H1 (cell line): ENCODE measurements at regions of chr9 and their contacts with region 1.

Region 1: GRCh38 chr9:126626127-126626925 is 12.6 kb downstream of the LMX1B start:
- DNase-seq: peak in 1 of 2 experiments; percentile 75
- H3K4me3 ChIP-seq: peak overlapping the region; percentile 2 to 56 (median 36); a peak in 6 of 8 replicates
- H3K27ac ChIP-seq: no peak overlapping the region
- H3K4me1 ChIP-seq: peaks cover 0 to 43% (median 33%) of the 10 kb centered on the region in 4 experiments; a peak in 6 of 7 replicates
- H3K27me3 ChIP-seq: peaks cover 80 to 100% (median 95%) of the 10 kb centered on the region in 4 experiments
- CTCF ChIP-seq: no peak
- EP300 ChIP-seq: no peak
- POLR2A ChIP-seq: no peak
- RAD21 ChIP-seq: no peak

Region 2: DNA sequence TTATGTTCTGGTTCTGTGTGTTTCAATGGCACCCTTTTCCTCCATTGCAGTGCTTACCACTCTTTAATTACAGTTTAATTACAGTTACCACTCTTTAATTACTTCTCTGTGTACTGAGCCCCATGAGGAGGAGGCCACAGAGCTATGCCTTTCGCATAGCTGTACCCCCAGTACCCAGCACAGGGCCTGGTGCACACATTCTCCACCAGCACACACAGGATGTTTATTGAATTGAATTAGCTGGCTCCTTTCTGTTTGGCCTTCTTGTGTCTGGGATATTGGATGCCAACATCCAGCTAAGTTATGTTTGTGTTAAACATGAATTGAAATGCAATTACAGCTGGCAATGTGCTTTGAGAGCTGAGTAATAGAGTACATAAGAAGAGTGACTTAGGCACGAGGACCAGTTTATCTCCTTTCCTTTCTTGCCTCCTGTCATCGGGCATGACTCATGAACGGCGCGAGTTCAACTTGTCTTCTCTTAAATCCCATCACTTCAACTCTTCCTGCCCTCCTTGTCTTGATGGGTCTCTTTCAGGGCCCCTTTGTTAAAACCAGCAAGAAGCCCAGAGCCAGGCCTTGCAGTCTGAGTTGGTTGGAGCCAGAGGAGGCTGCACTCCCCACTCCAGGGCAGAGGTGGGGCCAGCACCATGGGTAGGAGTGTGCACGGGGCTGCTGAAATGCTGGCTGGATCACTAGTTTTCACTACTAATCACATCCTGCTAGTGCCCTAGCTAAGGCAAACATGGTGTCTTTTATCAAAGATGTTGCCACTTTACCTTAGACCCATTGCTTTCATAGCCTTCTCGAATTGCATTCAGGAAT is 262.3 kb before region 1 on chr9:
- CTCF ChIA-PET with region 1: no interaction called
- POLR2A ChIA-PET with region 1: no interaction called
- DNase-seq: no peak
- H3K4me3 ChIP-seq: no peak overlapping the region
- H3K27ac ChIP-seq: no peak overlapping the region
- H3K4me1 ChIP-seq: no peaks in the 10 kb centered on the region
- H3K27me3 ChIP-seq: no peaks in the 10 kb centered on the region
- CTCF ChIP-seq: no peak
- EP300 ChIP-seq: no peak
- POLR2A ChIP-seq: no peak
- RAD21 ChIP-seq: no peak

Region 3: DNA sequence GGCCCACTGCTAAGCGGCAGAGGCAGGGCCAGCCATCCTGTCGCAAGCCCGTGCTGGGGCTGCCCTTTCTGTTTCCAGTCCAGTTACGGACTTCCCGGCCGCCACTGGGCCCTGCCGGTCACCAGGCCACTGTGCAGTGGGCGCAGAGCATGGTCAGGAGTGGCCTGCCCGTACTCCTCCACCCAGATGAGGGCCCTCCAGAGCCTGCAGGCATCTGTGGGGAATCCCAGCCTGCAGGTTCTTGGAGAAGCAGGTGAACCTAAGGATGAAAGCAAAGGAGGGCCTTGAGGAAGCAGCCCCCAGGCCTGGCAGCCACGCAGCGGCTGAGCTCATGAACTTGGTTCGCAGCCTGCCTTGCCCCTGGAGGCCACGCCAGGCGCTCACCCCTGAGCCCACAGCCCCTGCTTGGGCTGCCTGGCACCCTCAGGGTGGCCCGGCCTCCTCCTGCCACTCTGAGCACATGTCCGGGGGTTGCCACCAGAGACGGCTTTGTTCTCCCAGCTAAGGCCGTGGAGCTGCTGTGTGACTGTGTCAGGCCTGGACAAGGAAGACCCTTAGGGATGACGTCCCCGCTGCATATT is 119.9 kb before region 1 on chr9:
- CTCF ChIA-PET with region 1: no interaction called
- POLR2A ChIA-PET with region 1: no interaction called
- DNase-seq: no peak
- H3K4me3 ChIP-seq: no peak overlapping the region
- H3K27ac ChIP-seq: no peak overlapping the region
- H3K4me1 ChIP-seq: peaks cover 0 to 4% (median 1%) of the 10 kb centered on the region in 4 experiments; a peak in 2 of 7 replicates
- H3K27me3 ChIP-seq: no peaks in the 10 kb centered on the region; a peak in 3 of 7 replicates
- CTCF ChIP-seq: no peak
- EP300 ChIP-seq: no peak
- POLR2A ChIP-seq: no peak
- RAD21 ChIP-seq: no peak

Region 4: GRCh38 chr9:126581893-126582292 is 44.4 kb before region 1 on chr9:
- CTCF ChIA-PET with region 1: no interaction called
- POLR2A ChIA-PET with region 1: no interaction called
- DNase-seq: no peak
- H3K4me3 ChIP-seq: no peak overlapping the region
- H3K27ac ChIP-seq: no peak overlapping the region
- H3K4me1 ChIP-seq: peaks cover 0 to 7% (median 3%) of the 10 kb centered on the region in 4 experiments; a peak in 4 of 7 replicates
- H3K27me3 ChIP-seq: 0 out of 7 replicates have a peak, but pooled peaks cover 0 to 2% (median 0%) of the 10 kb centered on the region in 4 experiments
- CTCF ChIP-seq: no peak
- EP300 ChIP-seq: no peak
- POLR2A ChIP-seq: no peak
- RAD21 ChIP-seq: no peak

Region 5: DNA sequence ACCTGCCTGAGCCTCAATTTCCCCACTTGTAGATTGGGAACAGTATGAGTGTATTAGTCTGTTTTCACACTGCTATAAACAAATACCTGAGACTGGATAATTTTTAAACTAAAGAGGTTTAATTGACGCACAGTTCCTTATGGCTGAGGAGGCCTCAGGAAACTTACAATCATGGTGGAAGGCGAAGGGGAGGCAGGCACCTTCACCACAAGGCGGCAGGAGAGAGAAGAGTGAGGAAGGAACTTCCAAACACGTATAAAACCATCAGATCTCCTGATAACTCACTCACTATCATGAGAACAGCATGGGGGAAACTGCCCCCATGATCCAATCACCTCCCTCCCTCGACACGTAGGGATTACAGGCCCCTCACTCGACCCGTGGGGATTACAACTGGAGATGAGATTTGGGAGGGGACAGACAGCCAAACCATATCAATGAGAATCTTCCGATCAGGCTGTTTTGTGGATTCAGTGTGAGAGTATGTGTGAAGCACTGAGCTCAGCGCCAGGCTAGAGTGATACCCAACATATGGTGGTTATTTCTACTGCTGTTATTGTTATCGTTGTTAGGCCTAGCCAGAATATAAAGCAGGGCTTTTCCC is 27.2 kb before region 1 on chr9:
- CTCF ChIA-PET with region 1: no interaction called
- POLR2A ChIA-PET with region 1: no interaction called
- DNase-seq: peak in 1 of 2 experiments; percentile 62
- H3K4me3 ChIP-seq: no peak overlapping the region
- H3K27ac ChIP-seq: no peak overlapping the region
- H3K4me1 ChIP-seq: no peaks in the 10 kb centered on the region
- H3K27me3 ChIP-seq: peaks cover 0 to 3% (median 1%) of the 10 kb centered on the region in 4 experiments; a peak in 3 of 7 replicates
- CTCF ChIP-seq: peak; percentile 50 to 70 (median 63)
- EP300 ChIP-seq: no peak
- POLR2A ChIP-seq: no peak
- RAD21 ChIP-seq: peak; percentile 27 to 46; a peak in 3 of 4 replicates

Region 6: DNA sequence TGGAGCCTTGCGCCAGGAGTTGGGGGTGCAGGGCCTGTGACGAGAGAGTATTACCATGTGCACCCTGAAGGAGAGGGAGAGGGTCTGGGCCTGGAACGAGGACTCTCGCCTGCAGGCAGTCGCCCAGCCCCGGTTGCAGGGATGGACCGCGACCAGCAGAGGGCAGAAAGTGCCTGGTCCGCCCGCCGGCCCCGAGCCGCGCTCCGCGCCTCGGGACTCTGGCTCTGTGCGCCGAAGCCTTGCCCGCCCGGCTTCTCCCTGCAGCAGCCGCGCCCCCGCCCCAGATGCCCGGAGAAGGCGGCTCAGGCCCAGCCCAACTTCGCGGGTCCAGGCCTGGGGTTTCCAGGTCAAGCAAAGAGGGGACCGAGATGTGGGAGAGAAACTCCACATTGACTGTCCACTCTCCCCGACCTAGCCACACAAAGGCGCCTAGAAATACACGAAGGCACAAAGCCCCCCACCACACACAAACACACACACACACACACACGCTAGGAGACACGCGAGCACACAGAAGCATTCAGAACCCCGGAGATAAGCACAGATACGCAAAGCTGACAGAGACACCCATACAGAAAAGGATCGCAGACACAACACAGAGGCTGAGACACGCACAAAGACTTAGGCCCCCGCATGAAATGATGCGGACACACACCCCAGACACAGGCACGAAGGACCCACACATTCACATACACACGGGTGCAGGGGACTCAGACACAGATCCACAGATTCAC is 14.6 kb before region 1 on chr9:
- CTCF ChIA-PET with region 1: interaction called, 17 read pairs
- POLR2A ChIA-PET with region 1: interaction called, 14 read pairs
- DNase-seq: peak; percentile 70 to 95
- H3K4me3 ChIP-seq: peak overlapping the region; percentile 30 to 63 (median 34); a peak in 6 of 8 replicates
- H3K27ac ChIP-seq: no peak overlapping the region
- H3K4me1 ChIP-seq: peaks cover 12 to 54% (median 34%) of the 10 kb centered on the region in 4 experiments
- H3K27me3 ChIP-seq: peaks cover 80 to 92% (median 85%) of the 10 kb centered on the region in 4 experiments; a peak in 6 of 7 replicates
- CTCF ChIP-seq: peak in 2 of 3 experiments; percentile 87; a peak in 3 of 4 replicates
- EP300 ChIP-seq: no peak; a peak in 1 of 3 replicates
- POLR2A ChIP-seq: no peak
- RAD21 ChIP-seq: peak; percentile 72 to 82

Region 7: DNA sequence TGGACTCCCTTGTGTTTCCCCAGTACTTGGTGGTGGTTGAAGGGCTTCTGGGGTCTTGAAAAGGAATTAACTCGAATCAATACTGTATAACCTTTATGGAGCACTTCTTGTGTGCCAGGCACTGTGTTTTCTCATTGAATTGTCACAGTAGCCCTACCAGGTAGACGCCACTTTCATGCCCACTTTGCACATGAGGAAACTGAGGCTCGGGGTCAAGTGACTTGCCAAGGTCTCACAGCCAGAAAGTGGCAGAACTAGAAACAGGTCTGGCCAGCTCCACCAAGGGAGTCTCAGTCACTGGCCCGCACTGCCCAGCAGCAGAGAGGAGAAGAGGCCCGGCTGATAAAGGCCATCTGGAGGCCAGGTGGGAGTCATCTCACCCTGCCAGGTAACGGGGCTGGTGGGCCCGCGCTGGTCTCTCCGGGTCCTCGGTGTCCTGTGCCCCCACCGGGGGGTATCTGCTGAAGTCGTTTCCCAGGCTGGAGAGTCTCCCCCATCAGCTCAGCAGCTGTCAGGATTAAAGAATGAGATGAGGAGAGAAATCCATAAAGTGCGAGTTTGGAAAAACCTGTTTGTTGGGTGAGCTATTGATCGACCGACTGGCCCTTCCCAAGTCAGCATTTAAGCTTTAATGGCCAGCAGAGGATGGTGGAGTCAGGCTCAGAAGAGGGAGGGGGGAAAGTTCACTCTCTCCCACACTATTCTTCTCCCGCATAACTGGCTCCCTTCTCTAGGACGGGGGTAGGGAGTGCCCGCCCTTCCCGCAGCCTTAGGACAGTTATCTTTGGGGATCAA is 17.6 kb after region 1 on chr9:
- CTCF ChIA-PET with region 1: interaction called, 33 read pairs
- POLR2A ChIA-PET with region 1: interaction called, 6 read pairs
- DNase-seq: no peak
- H3K4me3 ChIP-seq: no peak overlapping the region
- H3K27ac ChIP-seq: no peak overlapping the region
- H3K4me1 ChIP-seq: peaks cover 0 to 19% (median 7%) of the 10 kb centered on the region in 4 experiments; a peak in 5 of 7 replicates
- H3K27me3 ChIP-seq: peaks cover 2 to 33% (median 24%) of the 10 kb centered on the region in 4 experiments
- CTCF ChIP-seq: no peak
- EP300 ChIP-seq: no peak
- POLR2A ChIP-seq: no peak
- RAD21 ChIP-seq: no peak

Region 8: DNA sequence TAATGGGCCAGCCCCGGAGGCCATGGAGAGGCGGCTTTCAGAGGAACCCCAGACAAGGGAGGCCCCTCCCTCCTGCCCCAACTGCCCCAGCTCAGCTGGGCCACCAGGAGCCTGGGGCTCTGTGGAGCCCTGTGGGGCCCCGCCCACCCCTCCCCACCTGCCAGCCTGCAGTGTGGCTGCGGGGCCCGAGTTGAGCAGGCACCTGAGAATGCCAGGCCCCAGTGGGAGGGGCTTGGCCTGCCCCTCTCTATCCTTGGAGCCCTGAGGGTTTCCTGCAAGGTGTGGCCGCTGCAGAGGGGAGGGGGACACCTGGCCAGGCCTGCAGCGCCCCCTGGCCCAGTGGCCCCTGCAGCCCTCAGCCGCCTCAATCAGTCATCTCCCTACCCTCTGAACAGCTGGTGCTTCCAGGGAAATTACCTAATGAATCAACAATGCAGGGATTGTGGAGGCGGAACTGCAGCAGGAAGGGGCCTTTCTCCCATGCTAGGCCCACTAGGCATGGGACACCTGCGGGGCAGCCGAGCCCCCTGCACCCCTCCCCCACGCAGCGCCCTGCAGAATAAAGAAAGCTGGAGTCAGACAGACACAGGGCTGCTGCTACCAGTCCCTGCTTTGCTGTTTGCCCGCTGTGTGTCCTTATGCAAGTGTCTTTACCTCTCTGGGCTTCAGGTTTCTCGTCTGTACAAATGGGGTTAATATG is 35.3 kb after region 1 on chr9:
- CTCF ChIA-PET with region 1: interaction called, 25 read pairs
- POLR2A ChIA-PET with region 1: no interaction called
- DNase-seq: peak; percentile 84 to 90
- H3K4me3 ChIP-seq: no peak overlapping the region; a peak in 1 of 8 replicates
- H3K27ac ChIP-seq: no peak overlapping the region
- H3K4me1 ChIP-seq: peaks cover 11 to 41% (median 30%) of the 10 kb centered on the region in 4 experiments
- H3K27me3 ChIP-seq: peaks cover 0 to 6% (median 2%) of the 10 kb centered on the region in 4 experiments; a peak in 3 of 7 replicates
- CTCF ChIP-seq: peak in 2 of 3 experiments; percentile 62 to 81; a peak in 3 of 4 replicates
- EP300 ChIP-seq: no peak
- POLR2A ChIP-seq: no peak
- RAD21 ChIP-seq: peak; percentile 62 to 75

Region 9: GRCh38 chr9:126673689-126674364 is 47.5 kb after region 1 on chr9:
- CTCF ChIA-PET with region 1: interaction called, 323 read pairs
- POLR2A ChIA-PET with region 1: interaction called, 4 read pairs
- DNase-seq: no peak
- H3K4me3 ChIP-seq: peak overlapping the region in 1 of 4 experiments; percentile 10; a peak in 1 of 8 replicates
- H3K27ac ChIP-seq: no peak overlapping the region
- H3K4me1 ChIP-seq: peaks cover 17 to 66% (median 55%) of the 10 kb centered on the region in 4 experiments
- H3K27me3 ChIP-seq: peaks cover 0 to 27% (median 17%) of the 10 kb centered on the region in 4 experiments; a peak in 6 of 7 replicates
- CTCF ChIP-seq: no peak
- EP300 ChIP-seq: no peak
- POLR2A ChIP-seq: no peak
- RAD21 ChIP-seq: no peak